ENCODE measurements at regions of chr7 and their contacts with region 1.

Region 1: DNA sequence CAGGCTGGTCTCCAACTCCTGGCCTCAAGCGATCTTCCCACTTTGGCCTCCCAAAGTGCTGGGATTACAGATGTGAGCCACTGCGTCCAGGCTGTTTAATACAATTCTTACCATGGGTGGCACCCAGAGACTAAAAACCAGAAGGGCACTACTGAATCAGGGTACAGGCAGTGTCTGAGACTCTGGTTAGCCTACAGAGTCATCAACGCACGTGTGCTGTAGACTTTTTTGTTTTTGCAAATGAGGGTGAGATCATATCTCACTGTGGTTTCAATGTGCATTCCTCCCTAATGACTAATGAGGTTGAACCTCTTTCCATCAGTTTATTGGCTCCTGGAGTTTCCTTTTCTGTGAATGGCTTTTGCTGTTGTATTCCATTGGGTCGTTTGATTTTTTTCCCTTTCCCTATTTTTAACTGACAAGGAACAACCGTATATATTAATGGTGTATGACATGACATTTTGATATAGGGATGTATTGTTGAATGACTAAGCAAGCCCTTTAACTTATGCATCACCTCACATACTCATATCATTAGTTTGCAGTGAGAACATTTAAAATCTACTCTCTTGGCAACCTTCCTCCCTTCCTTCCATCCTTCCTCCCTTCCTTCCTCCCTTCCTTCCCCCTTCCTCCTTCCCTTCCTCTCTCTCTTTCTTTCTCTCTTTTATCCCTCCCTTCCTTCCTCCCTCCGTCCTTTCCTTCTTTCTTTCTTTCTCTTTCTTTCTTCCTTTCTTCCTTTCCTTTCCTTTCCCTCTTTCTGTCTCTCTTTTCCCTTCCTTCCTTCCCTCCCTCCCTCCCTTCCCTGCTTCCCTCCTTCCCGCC is 9.3 kb upstream of the METTL27 start:
- DNase-seq: no peak
- ATAC-seq: peak; percentile 64 to 76 (median 75)
- H3K4me3 ChIP-seq: no peak overlapping the region
- H3K27ac ChIP-seq: peak overlapping the region; percentile 67
- H3K4me1 ChIP-seq: peaks cover 8% of the 10 kb centered on the region
- H3K27me3 ChIP-seq: peaks cover 0 to 2% (median 0%) of the 10 kb centered on the region in 3 donors
- CTCF ChIP-seq: no peak

Region 2: DNA sequence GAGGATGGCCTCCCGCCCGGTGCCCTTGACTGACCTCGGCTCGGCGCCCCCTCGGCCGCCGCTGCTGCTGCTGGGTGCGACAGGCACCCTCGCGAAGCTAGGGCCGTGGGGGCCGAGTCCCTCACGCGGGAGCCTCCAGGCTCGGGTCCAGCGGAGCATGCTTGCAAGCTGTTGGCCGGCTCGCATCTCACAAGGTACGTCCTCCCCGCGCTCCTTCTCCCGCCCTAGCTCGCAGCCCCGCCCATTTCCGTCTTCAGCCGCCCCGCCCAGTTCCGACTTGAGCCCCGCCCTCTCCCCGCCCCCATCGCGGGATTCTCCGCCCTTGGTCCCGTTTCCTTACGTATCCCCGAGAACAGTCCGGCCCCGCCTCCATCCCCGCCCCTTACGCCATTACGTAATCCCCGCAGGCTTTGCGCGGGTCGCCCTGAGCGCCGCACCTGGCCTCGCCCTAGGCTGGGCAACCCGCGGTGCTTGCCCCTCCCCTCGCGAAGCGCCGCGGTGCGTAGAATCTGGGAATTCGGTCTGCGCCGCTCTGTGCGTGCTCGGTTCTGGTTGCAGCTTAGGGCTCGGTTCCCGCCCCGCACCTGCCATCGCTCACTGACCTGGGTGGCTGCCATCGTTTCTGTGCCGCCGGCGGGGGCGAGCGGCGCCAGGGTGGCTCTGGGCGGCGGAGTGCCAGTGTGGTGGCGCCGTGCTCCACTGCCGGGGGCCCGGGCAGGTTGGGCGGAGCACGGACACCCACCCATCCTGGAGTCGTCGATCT is 112.8 kb before region 1 on chr7 and contains the start of gene ABHD11:
- intact Hi-C with region 1: loop called in 1 of 2 experiments (anchors 10 kb)
- DNase-seq: peak; percentile 96 to 99
- ATAC-seq: peak; percentile 95 to 97 (median 96)
- H3K4me3 ChIP-seq: peak within 1 kb of the TSS; percentile 91
- H3K27ac ChIP-seq: peak within 1 kb of the TSS; percentile 83
- H3K4me1 ChIP-seq: no peaks in the 10 kb centered on the region
- H3K27me3 ChIP-seq: no peaks in the 10 kb centered on the region
- CTCF ChIP-seq: no peak
- total RNA-seq, gene ABHD11: 6.8 to 16.9 (median 11.5) TPM

Region 3: GRCh38 chr7:73811760-73812168 is 39.9 kb before region 1 on chr7:
- intact Hi-C with region 1: loop called (anchors 1 to 2 kb)
- DNase-seq: peak; percentile 61 to 78
- ATAC-seq: peak; percentile 78 to 89 (median 85)
- H3K4me3 ChIP-seq: no peak overlapping the region
- H3K27ac ChIP-seq: no peak overlapping the region
- H3K4me1 ChIP-seq: no peaks in the 10 kb centered on the region
- H3K27me3 ChIP-seq: peaks cover 0 to 4% (median 0%) of the 10 kb centered on the region in 3 donors
- CTCF ChIP-seq: peak; percentile 75

Region 4: DNA sequence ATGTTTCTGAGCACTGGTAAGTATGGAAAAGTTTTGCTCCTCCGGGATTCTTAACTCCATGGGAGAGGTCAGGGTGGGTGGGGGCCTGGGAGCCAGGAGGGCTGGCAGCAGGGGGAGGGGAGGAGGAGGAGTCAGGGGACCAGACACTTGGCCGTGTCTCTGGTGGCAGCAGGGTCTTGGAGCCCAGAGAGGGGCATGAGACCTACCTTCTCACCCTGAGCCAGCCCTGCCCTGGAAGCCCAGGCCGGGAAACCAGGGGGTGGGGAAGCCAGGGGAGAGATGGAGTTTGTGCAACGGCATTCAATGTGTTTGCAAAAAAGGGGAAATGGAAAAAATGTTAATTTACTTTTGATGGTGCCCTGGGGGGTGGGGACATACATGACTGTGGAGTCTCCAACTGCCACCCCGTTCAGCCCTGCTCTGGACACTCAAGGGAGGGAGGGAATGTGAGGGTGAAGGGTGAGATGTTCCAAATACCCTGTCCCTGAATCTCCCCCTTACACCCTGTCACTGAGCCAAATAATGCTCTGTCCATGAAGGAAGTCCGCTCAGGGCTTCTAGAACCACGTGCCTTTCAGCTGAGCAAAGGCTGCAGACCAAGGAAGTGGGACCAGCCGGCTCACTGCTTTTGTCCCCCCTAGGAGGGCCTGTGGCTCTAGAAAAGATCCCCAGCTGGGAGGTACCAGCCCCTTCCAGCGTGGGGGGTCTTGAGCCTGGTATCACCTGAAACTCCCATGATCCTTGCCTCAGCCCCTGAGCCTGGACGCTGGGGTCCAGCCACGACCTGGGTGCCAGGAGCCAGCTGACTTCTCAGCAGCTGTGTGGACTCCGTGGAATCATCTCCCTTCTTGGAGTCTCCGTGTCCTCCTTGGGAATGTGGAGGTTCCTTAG is 57.7 kb after region 1 on chr7:
- intact Hi-C with region 1: no loop called
- DNase-seq: peak in 1 of 2 donors; percentile 49
- ATAC-seq: no peak
- H3K4me3 ChIP-seq: no peak overlapping the region
- H3K27ac ChIP-seq: no peak overlapping the region
- H3K4me1 ChIP-seq: no peaks in the 10 kb centered on the region
- H3K27me3 ChIP-seq: no peaks in the 10 kb centered on the region
- CTCF ChIP-seq: no peak